CD8-positive, alpha-beta T cell (primary cell): ENCODE measurements at regions of chr12 and their contacts with region 1.

Region 1: DNA sequence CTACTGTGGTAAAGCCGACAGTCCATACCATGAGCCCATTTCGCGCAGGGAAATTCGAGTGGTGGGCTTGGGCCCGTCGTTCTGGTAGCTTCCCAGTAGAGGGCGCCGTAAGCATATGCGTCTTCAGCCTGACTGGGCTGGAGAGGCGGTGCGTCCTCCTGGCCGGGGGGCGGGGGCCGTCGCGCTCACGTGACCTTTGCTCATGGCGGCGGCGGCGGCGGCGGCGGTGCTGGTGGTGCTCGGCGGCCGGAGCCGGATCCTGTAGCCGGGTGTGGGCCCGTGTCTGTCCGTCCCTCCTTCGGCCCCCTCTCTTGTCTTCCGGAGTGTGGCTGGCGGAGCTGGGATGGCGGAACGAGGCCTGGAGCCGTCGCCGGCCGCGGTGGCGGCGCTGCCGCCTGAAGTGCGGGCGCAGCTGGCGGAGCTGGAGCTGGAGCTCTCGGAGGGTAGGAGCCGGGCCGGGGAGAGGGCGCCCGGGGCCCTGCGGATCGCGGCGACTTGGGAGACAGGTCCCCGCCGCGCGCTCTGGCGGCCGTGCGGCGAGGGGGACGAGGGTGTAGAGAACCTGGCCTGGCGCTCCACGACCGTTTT is at the start of gene DIP2B:
- DNase-seq: peak; percentile 92 to 97 (median 95)
- ATAC-seq: peak; percentile 92
- H3K4me3 ChIP-seq: peak within 1 kb of the TSS; percentile 88 to 91
- H3K4me3 Mint-ChIP-seq: peak within 1 kb of the TSS; percentile 94
- H3K27ac ChIP-seq: peak within 1 kb of the TSS; percentile 63 to 73
- H3K27ac Mint-ChIP-seq: peak within 1 kb of the TSS; percentile 92
- H3K4me1 ChIP-seq: peaks cover 42% of the 10 kb centered on the region
- H3K4me1 Mint-ChIP-seq: peaks cover 50% of the 10 kb centered on the region
- H3K27me3 ChIP-seq: no peaks in the 10 kb centered on the region
- H3K27me3 Mint-ChIP-seq: no peaks in the 10 kb centered on the region
- CTCF ChIP-seq: peak; percentile 86
- total RNA-seq, gene DIP2B: 18.8 to 20.7 TPM

Region 2: GRCh38 chr12:50533203-50533584 is 28.3 kb after region 1 on chr12:
- CTCF ChIA-PET with region 1: interaction called, 5 read pairs
- POLR2A ChIA-PET with region 1: interaction called, 11 read pairs
- intact Hi-C with region 1: loop called (anchors 2 kb)
- DNase-seq: peak in 1 of 9 experiments; percentile 20
- ATAC-seq: peak; percentile 17
- H3K4me3 ChIP-seq: no peak overlapping the region
- H3K4me3 Mint-ChIP-seq: no peak overlapping the region
- H3K27ac ChIP-seq: peak overlapping the region; percentile 19 to 72
- H3K27ac Mint-ChIP-seq: no peak overlapping the region
- H3K4me1 ChIP-seq: peaks cover 30% of the 10 kb centered on the region
- H3K4me1 Mint-ChIP-seq: peaks cover 39% of the 10 kb centered on the region
- H3K27me3 ChIP-seq: no peaks in the 10 kb centered on the region
- H3K27me3 Mint-ChIP-seq: no peaks in the 10 kb centered on the region
- CTCF ChIP-seq: no peak

Region 3: GRCh38 chr12:50620109-50620977 is 115.5 kb after region 1 on chr12:
- CTCF ChIA-PET with region 1: interaction called, 10 read pairs
- POLR2A ChIA-PET with region 1: interaction called, 4 read pairs
- intact Hi-C with region 1: no loop called
- DNase-seq: no peak
- ATAC-seq: peak; percentile 40
- H3K4me3 ChIP-seq: no peak overlapping the region
- H3K4me3 Mint-ChIP-seq: no peak overlapping the region
- H3K27ac ChIP-seq: no peak overlapping the region
- H3K27ac Mint-ChIP-seq: peak overlapping the region; percentile 56
- H3K4me1 ChIP-seq: peaks cover 42% of the 10 kb centered on the region
- H3K4me1 Mint-ChIP-seq: peaks cover 68% of the 10 kb centered on the region
- H3K27me3 ChIP-seq: no peaks in the 10 kb centered on the region
- H3K27me3 Mint-ChIP-seq: no peaks in the 10 kb centered on the region
- CTCF ChIP-seq: no peak

Region 4: GRCh38 chr12:50734409-50735263 is 229.7 kb after region 1 on chr12:
- CTCF ChIA-PET with region 1: interaction called, 3 read pairs
- POLR2A ChIA-PET with region 1: no interaction called
- intact Hi-C with region 1: loop called in 1 of 2 experiments (anchors 1 kb)
- DNase-seq: peak in 3 of 9 experiments; percentile 23 to 46 (median 25)
- ATAC-seq: peak; percentile 61
- H3K4me3 ChIP-seq: no peak overlapping the region
- H3K4me3 Mint-ChIP-seq: no peak overlapping the region
- H3K27ac ChIP-seq: no peak overlapping the region
- H3K27ac Mint-ChIP-seq: no peak overlapping the region
- H3K4me1 ChIP-seq: no peaks in the 10 kb centered on the region
- H3K4me1 Mint-ChIP-seq: no peaks in the 10 kb centered on the region
- H3K27me3 ChIP-seq: no peaks in the 10 kb centered on the region
- H3K27me3 Mint-ChIP-seq: no peaks in the 10 kb centered on the region
- CTCF ChIP-seq: peak; percentile 48